AG04449 (cell line): ENCODE measurements at regions of chr7 and their contacts with region 1.

Region 1: DNA sequence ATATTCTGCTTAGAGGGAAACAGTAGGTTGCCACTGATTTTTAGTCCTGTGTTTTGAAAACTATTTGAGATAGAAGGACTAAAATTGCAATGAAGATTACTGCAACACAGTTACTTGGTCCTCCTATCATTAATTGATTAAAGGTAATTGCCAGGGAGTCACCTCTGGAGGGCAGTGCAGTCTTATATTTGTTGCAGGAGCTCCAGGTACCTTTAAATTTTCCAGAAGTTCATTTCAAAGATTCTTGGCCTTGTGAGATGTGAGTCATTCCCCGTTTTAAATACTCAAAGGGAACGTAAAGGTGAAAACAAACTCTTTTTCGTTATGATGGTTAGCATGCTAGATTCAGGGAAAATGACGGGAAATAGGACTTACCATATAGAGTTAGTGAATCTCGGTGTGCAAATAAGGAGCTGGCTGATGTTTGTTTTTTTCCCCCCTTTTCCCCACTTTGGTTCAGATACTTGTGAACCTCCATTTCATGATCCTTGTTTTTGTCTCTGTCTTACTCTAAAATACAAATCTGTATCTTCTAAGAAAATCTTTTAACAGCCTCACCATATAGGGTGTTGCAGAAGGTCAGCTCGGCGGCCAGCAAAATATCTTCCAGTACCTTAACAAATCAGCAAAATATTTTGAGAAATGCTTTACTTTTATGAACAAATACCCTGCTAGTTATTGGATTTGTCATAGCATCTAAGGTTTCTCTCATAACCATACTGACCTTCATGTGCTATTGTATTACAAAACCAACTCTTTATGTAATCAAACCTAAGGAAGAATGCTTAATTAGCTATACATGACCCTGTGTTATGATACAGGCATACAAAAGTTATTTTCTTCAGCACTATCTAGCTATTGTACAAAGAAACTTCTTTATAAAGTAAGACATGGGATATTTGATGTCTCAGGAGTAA is 143.0 kb upstream of the HDAC9 start:
- DNase-seq: peak; percentile 23
- H3K4me3 ChIP-seq: no peak overlapping the region
- CTCF ChIP-seq: peak; percentile 53

Region 2: DNA sequence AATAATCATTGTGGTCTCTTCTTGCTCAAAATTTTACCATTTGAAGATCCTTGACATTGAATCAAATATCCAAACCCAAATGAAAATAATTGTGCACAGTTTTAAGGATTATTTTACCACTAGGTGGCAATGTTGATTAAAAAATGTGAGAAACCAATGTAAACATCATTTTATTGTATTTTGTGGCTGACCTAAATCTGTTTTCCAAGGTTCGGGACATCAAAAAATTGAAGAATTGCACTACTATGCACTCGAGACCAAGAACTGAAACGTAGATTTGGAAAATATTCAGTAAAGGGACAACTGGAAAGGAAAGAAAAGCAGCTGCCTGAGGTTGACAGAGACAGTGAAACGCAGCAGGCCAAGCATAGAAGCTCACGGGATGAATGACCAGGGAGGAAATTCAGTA is 671.6 kb before region 1 on chr7:
- CTCF ChIA-PET with region 1: interaction called, 99 read pairs
- POLR2A ChIA-PET with region 1: no interaction called
- DNase-seq: no peak
- H3K4me3 ChIP-seq: no peak overlapping the region
- CTCF ChIP-seq: no peak

Region 3: DNA sequence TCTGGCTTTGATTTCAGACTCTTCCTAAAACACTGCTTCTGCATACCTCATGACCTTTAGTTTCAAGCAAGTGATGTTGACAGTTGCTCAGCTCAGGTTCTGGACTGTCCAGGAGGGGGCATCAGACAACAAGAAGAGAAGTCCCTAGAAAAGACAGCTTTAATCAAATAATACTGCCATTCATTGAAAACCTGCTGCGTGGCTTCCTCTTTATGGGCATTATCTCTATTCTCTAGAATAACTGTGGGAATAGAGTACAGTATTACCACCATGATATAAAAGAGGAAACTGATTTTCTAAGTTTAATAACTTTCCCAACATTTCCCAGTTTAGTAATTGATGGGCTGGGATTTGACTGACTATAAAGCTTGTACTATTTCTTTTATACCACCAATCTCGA is 582.7 kb before region 1 on chr7:
- CTCF ChIA-PET with region 1: interaction called, 21 read pairs
- POLR2A ChIA-PET with region 1: no interaction called
- DNase-seq: no peak
- H3K4me3 ChIP-seq: no peak overlapping the region
- CTCF ChIP-seq: peak; percentile 73

Region 4: GRCh38 chr7:18276383-18276782 is 76.2 kb before region 1 on chr7:
- CTCF ChIA-PET with region 1: no interaction called
- POLR2A ChIA-PET with region 1: no interaction called
- DNase-seq: no peak
- H3K4me3 ChIP-seq: no peak overlapping the region
- CTCF ChIP-seq: no peak

Region 5: GRCh38 chr7:18541181-18541870 is 188.7 kb after region 1 on chr7:
- CTCF ChIA-PET with region 1: interaction called, 12 read pairs
- POLR2A ChIA-PET with region 1: no interaction called
- DNase-seq: peak; percentile 77
- H3K4me3 ChIP-seq: no peak overlapping the region
- CTCF ChIP-seq: no peak

Region 6: GRCh38 chr7:18583305-18583704 is 230.7 kb after region 1 on chr7:
- CTCF ChIA-PET with region 1: interaction called, 45 read pairs
- POLR2A ChIA-PET with region 1: no interaction called
- DNase-seq: peak; percentile 40
- H3K4me3 ChIP-seq: no peak overlapping the region
- CTCF ChIP-seq: no peak

Region 7: DNA sequence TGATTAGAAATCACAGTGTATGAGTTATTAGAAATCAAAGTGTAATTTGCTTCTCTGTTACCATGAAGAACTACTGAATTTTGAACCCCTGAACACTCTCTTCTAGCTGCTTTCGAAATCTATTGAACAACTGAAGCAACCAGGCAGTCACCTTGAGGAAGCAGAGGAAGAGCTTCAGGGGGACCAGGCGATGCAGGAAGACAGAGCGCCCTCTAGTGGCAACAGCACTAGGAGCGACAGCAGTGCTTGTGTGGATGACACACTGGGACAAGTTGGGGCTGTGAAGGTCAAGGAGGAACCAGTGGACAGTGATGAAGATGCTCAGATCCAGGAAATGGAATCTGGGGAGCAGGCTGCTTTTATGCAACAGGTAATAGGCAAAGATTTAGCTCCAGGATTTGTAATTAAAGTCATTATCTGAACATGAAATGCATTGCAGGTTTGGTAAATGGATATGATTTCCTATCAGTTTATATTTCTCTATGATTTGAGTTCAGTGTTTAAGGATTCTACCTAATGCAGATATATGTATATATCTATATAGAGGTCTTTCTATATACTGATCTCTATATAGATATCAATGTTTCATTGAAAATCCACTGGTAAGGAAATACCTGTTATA is 313.6 kb after region 1 on chr7:
- CTCF ChIA-PET with region 1: interaction called, 49 read pairs
- POLR2A ChIA-PET with region 1: no interaction called
- DNase-seq: peak; percentile 16
- H3K4me3 ChIP-seq: no peak overlapping the region
- CTCF ChIP-seq: peak; percentile 92

Region 8: DNA sequence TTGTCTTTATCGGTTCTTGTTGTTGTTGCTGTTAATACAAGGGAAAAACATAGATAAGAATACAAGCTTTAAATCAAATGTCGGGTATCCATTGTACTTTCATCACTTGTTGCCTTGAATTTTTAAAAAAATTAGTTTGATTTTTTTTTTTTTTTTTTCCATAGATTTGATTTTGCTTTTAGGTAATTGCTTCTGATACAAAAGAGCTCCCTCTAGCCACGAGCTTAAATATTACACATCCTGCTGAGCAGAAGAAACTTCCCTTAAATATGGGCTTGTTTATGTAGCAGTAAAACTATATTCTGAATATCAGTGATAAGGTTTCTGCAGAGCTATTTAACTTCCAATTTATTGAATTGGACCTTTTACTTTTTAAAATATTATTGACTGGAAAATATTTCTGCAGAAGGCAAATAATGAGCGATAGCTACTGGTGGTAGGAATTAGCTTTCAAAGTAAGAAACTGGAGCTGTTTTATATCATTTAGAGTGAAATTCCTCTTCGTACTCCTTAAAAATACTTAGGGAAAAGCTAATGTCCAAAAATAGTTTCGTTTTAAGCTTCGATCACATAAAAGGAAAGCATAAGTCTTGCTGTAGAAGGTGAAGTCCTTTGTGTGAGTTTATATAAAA is 1139.3 kb after region 1 on chr7:
- CTCF ChIA-PET with region 1: interaction called, 16 read pairs
- POLR2A ChIA-PET with region 1: no interaction called
- DNase-seq: peak; percentile 5
- H3K4me3 ChIP-seq: no peak overlapping the region
- CTCF ChIP-seq: peak; percentile 47